ENCODE measurements at regions of chr2 and their contacts with region 1.

Region 1: DNA sequence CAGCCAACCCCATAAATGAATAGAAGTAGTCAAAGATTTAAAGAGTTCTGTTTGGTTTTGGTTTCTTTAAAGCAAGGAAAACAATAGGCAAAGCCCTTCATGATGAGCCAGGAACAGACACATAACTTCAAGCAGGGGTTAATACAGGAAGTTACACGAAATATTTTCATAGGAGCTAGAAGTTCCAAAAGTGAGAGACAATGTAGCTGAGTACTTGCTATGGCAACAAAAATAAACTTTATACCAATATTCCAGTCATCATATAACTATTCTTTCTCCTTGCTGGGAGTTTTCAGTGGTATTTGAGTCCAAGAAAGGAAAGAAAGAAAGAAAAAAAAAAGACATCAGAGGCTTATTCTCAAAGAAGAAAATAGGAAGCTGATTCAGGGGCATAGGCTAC is 56.2 kb downstream of the COBLL1 start:
- DNase-seq: no peak
- H3K4me3 ChIP-seq: no peak overlapping the region
- H3K27ac ChIP-seq: no peak overlapping the region
- H3K4me1 ChIP-seq: peaks cover 4% of the 10 kb centered on the region
- CTCF ChIP-seq: no peak

Region 2: DNA sequence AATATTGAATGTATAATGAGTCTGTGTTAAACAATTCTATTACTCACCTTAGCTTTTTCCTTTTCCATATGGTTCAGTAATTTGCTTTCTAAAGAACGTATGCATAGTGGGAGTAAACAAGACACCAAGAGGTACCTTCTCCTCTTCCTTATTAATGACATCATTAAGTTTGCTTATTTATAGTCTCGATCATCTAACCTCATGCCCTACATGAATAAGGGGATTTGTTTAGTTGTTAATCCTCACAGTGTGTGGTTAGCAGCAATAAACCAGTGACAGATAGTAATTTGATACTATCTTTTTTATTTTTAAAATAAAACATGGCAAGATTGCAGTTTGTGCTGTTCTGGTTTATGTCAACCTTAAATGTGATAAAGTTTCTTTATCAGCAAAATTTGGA is 13.6 kb before region 1 on chr2:
- CTCF ChIA-PET with region 1: no interaction called
- POLR2A ChIA-PET with region 1: interaction called, 11 read pairs
- intact Hi-C with region 1: no loop called
- DNase-seq: no peak
- H3K4me3 ChIP-seq: no peak overlapping the region
- H3K27ac ChIP-seq: no peak overlapping the region
- H3K4me1 ChIP-seq: no peaks in the 10 kb centered on the region
- CTCF ChIP-seq: no peak

Region 3: DNA sequence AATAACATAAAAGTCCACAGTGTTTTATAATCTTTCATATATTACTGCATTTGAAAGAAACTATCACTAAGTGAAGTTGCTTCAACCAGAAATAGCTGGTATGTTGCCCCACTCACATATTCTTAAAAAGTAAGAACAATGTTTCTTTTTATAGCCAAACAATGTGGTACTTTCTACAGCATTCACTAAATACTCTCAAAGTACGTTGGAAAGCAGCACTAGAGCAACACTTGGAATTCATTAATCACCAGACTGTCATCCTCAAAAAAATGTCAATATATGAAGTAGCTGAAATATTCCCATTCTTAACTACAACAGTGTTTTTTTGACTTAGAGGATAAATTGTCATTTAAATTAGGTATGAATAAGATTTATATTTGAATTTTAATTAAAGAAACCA is 23.3 kb after region 1 on chr2:
- CTCF ChIA-PET with region 1: interaction called, 5 read pairs
- POLR2A ChIA-PET with region 1: interaction called, 12 read pairs
- intact Hi-C with region 1: no loop called
- DNase-seq: no peak
- H3K4me3 ChIP-seq: no peak overlapping the region
- H3K27ac ChIP-seq: no peak overlapping the region
- H3K4me1 ChIP-seq: no peaks in the 10 kb centered on the region
- CTCF ChIP-seq: no peak

Region 4: GRCh38 chr2:164824865-164825264 is 39.4 kb after region 1 on chr2:
- CTCF ChIA-PET with region 1: no interaction called
- POLR2A ChIA-PET with region 1: no interaction called
- intact Hi-C with region 1: no loop called
- DNase-seq: no peak
- H3K4me3 ChIP-seq: no peak overlapping the region
- H3K27ac ChIP-seq: no peak overlapping the region
- H3K4me1 ChIP-seq: no peaks in the 10 kb centered on the region
- CTCF ChIP-seq: no peak

Region 5: GRCh38 chr2:165126244-165126643 is 340.8 kb after region 1 on chr2:
- CTCF ChIA-PET with region 1: no interaction called
- POLR2A ChIA-PET with region 1: no interaction called
- intact Hi-C with region 1: no loop called
- DNase-seq: no peak
- H3K4me3 ChIP-seq: no peak overlapping the region
- H3K27ac ChIP-seq: no peak overlapping the region
- H3K4me1 ChIP-seq: no peaks in the 10 kb centered on the region
- CTCF ChIP-seq: no peak

Region 6: GRCh38 chr2:165219481-165219880 is 434.0 kb after region 1 on chr2:
- CTCF ChIA-PET with region 1: no interaction called
- POLR2A ChIA-PET with region 1: no interaction called
- intact Hi-C with region 1: no loop called
- DNase-seq: no peak
- H3K4me3 ChIP-seq: no peak overlapping the region
- H3K27ac ChIP-seq: no peak overlapping the region
- H3K4me1 ChIP-seq: no peaks in the 10 kb centered on the region
- CTCF ChIP-seq: no peak

Measured in OCI-LY7 (cell line).